Activated CD8-positive, alpha-beta T cell treated with anti-CD3 and anti-CD28 coated beads for 36 hours (primary cell): ENCODE measurements at regions of chr3 and their contacts with region 1.

Region 1: DNA sequence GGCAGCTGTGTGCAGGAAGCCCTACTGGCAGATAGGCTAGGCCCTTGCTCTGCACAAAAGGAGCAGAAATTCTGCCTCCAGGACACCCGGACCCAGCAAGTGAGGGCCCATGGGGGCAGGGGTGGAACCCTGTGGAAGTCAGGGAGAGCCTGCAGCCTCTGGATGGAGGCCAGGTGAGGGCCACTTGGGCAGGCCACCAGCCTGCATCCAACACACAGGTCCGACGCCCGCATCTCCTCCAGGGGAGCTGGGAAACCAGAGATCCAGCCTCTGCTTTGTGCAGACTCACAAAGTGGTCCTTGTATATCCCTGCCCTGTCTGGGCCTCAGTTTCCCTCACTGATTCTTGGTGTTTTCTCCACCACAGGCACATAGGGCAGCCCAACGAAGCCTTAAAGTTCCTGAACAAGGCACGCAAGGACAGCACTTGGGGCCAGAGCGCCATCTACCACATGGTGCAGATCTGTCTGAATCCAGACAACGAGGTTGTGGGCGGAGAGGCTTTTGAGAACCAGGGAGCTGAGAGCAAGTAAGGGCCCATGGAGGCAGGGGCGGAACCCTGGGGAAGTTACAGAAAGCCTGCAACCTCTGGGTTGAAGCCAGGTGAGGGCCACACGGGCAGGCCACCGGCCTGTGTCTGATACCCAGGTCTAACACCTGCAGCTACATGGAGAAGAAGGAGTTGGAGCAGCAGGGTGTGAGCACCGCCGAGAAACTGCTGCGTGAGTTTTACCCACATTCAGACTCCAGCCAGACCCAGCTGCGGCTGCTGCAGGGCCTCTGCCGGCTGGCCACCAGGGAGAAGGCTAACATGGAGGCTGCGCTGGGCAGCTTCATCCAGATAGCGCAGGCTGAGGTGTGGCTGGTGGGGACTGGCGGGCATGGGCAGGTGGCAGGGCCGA is 16.6 kb downstream of the CSRNP1 start:
- DNase-seq: no peak
- ATAC-seq: no peak
- H3K4me3 Mint-ChIP-seq: no peak overlapping the region
- H3K27ac Mint-ChIP-seq: no peak overlapping the region
- H3K4me1 Mint-ChIP-seq: peaks cover 30% of the 10 kb centered on the region
- H3K27me3 Mint-ChIP-seq: no peaks in the 10 kb centered on the region
- CTCF ChIP-seq: no peak

Region 2: DNA sequence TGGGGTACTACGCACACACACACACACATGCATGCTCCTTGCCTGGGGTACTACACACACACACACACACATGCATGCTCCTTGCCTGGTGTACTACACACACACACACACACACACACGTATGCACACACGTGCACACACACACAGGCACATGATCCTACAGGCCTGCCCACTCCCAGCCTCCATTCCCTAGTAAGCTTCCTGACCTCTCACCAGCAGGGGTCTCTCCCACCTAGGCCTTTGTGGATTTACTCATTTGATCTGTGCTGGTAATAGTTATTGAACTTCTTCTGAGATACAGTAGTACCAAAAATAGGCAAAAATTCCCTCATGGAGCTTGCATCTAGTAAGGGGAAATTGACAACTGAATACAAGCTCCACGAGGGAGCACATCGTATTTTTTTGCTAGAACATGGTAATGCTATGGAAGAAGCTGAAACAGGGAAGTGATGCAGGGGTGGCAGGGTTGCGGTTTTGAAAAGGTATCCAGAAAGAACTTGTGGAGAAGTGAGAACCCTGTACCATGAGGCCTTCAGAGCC is 10.2 kb before region 1 on chr3:
- CTCF ChIA-PET with region 1: interaction called, 12 read pairs
- POLR2A ChIA-PET with region 1: interaction called, 7 read pairs
- intact Hi-C with region 1: no loop called
- DNase-seq: peak; percentile 64
- ATAC-seq: peak; percentile 83
- H3K4me3 Mint-ChIP-seq: no peak overlapping the region
- H3K27ac Mint-ChIP-seq: no peak overlapping the region
- H3K4me1 Mint-ChIP-seq: peaks cover 18% of the 10 kb centered on the region
- H3K27me3 Mint-ChIP-seq: no peaks in the 10 kb centered on the region
- CTCF ChIP-seq: peak; percentile 46

Region 3: GRCh38 chr3:39346785-39347585 is 210.2 kb after region 1 on chr3:
- CTCF ChIA-PET with region 1: no interaction called
- POLR2A ChIA-PET with region 1: no interaction called
- intact Hi-C with region 1: no loop called
- DNase-seq: no peak
- ATAC-seq: peak; percentile 86
- H3K4me3 Mint-ChIP-seq: no peak overlapping the region
- H3K27ac Mint-ChIP-seq: peak overlapping the region; percentile 31
- H3K4me1 Mint-ChIP-seq: peaks cover 26% of the 10 kb centered on the region
- H3K27me3 Mint-ChIP-seq: no peaks in the 10 kb centered on the region
- CTCF ChIP-seq: no peak